Activated CD4-positive, alpha-beta memory T cell treated with anti-CD3 and anti-CD28 coated beads, Interleukin-2, amount 10 ng/mL, durations not matched to agents 7 days and 5 days (primary cell): ENCODE measurements at regions of chr2 and their contacts with region 1.

Region 1: DNA sequence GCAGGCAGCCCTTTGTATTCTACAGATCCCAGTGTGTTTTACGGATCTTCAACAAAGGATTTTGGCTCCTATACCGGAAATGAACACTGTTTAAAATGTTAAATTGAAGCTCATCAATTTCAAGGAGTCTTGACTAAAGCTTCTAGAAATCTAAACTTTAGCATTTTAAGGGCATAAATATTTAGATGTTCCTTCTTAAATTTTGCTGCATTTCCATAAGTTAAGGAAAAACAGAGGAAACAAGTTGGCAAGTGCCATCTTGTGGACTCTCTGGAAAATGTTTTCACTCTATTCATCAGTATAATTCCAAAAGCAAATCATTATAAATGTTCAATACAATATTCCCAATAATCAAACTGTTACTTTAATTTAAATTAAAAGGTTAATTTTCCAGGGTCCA is 19.6 kb downstream of the CHN1 start:
- DNase-seq: no peak
- H3K4me3 Mint-ChIP-seq: no peak overlapping the region
- H3K27ac Mint-ChIP-seq: no peak overlapping the region
- H3K4me1 Mint-ChIP-seq: peaks cover 2% of the 10 kb centered on the region
- H3K27me3 Mint-ChIP-seq: peaks cover 4% of the 10 kb centered on the region

Region 2: DNA sequence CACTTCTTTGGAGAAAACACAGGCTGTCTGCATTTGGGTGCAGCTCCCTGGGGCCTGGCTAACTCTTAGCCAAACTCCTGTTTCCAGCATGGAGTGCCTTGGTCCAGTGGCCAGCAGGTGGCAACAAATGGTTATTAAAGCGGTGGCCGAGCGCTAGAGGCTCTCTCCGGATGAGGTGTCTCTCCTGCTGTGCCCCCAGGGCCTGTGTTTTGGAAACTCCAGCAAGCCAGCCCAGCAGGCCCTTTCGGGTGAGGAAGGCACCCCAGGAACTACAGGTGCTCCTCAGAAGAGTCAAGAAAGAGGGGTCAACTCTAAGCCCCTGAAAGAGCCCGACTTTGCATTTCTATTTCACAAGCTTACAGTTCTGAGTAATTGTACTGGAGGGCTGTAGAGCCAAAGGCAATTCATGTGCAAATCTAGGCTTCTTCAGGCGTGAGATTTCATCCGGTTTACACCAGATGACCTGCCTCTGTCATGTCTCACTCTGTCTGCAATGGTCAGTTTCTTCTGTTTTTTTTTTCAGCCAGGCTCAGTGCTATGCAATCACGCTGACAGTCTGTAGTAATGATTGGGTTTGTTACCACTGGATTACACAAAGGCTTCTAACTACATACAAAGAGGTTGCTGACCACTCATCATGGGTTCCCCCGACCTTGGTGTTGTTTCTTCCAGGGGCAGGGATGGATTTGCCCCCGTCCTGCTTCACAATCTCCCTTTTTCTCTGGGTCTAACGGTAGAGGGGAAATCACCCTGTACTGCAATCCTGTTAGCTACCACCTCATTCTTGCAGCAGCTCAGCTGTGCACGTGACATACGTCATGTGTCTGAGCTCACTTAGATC is 213.8 kb before region 1 on chr2:
- CTCF ChIA-PET with region 1: interaction called, 11 read pairs
- POLR2A ChIA-PET with region 1: no interaction called
- DNase-seq: peak; percentile 45
- H3K4me3 Mint-ChIP-seq: no peak overlapping the region
- H3K27ac Mint-ChIP-seq: no peak overlapping the region
- H3K4me1 Mint-ChIP-seq: peaks cover 14% of the 10 kb centered on the region
- H3K27me3 Mint-ChIP-seq: no peaks in the 10 kb centered on the region

Region 3: GRCh38 chr2:174967691-174968260 is 17.9 kb before region 1 on chr2:
- CTCF ChIA-PET with region 1: no interaction called
- POLR2A ChIA-PET with region 1: no interaction called
- DNase-seq: no peak
- H3K4me3 Mint-ChIP-seq: no peak overlapping the region
- H3K27ac Mint-ChIP-seq: no peak overlapping the region
- H3K4me1 Mint-ChIP-seq: peaks cover 15% of the 10 kb centered on the region
- H3K27me3 Mint-ChIP-seq: peaks cover 4% of the 10 kb centered on the region

Region 4: DNA sequence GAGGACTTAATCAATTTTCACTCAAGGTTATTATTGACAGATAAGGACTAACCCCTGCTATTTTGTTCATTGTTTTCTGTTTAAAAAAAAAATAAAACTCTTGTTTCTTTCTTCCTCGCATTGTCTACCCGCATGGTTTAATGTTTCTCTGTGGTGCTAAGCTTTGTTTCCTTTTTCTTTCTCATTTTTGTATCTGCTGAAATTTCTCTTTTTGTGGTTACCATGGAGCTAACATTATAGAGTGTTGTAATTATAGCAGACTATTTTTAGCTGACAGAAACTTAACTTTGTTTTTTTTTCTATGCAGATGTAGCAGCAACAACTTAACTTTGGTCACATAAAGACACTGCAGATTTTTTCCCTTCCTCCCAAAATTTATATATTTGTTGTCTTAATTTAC is 62.6 kb after region 1 on chr2:
- CTCF ChIA-PET with region 1: no interaction called
- POLR2A ChIA-PET with region 1: no interaction called
- DNase-seq: no peak
- H3K4me3 Mint-ChIP-seq: no peak overlapping the region
- H3K27ac Mint-ChIP-seq: no peak overlapping the region
- H3K4me1 Mint-ChIP-seq: no peaks in the 10 kb centered on the region
- H3K27me3 Mint-ChIP-seq: peaks cover 2% of the 10 kb centered on the region